Calu3 (cell line): ENCODE measurements at regions of chr17 and their contacts with region 1.

Region 1: DNA sequence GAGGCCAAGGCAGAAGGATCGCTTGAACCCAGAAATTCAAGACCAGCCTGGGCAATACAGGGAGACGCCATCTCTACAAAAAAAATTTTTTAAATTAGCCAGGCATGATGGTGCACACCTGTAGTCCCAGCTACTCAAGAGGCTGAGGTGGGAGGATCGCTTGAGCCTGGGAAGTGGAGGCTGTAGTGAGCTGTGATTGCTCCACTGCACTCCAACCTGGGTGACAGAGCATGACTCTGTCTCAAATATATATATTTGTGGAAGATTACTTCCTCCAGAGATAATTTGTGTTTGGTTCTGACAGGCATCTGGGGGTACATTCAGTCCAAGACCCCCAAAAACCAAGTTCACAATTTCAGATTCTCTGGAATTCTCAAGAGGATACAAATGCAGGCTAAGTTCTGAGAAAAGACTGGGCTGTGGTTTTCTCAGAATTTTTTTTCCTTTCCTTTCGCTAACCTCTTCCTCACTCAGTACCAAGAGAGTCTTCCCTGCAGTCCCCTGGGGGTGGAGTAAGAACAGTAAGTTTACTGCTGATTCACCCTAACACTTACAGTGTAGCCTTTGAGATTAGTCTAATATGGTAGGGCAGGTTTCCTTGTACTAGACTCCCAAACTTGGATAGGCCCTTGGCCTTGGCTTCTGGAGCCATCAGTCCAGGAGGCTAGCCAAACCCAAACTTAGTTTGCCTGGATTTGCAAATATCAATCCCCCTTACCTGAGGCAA is 15.1 kb downstream of the GSDMB start:
- DNase-seq: peak; percentile 66
- H3K4me3 Mint-ChIP-seq: no peak overlapping the region
- H3K27ac Mint-ChIP-seq: no peak overlapping the region
- H3K4me1 Mint-ChIP-seq: peaks cover 12% of the 10 kb centered on the region
- H3K27me3 Mint-ChIP-seq: no peaks in the 10 kb centered on the region
- CTCF ChIP-seq: no peak

Region 2: DNA sequence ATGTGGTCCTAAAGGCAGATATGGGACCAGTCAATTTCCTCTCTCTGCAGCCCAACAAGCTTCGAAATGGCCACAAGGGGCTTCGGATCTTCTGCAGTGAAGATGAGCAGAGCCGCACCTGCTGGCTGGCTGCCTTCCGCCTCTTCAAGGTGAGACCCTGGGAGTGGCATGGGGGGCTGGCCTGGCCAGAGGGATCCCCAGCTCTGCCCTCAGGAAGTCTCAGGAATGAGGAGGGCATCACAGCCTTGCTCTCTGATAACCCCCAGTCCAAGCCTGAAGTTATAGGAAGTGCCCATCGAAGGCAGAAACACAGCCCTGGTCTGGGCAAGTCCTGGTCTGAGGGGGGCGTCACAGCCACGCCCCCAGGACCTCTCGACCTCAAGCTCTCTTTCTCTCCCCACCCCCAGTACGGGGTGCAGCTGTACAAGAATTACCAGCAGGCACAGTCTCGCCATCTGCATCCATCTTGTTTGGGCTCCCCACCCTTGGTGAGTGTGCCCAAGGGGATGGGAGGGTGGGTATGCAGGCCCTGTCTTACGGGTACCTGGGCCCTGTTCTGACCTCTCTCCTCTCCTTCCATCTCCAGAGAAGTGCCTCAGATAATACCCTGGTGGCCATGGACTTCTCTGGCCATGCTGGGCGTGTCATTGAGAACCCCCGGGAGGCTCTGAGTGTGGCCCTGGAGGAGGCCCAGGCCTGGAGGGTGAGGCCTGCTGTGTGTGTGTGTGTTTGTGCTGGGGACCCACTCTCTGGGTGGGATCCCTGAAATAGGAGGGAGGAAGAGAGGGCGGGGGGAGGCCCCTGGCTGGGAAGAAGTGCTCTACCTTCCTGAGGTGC is 158.3 kb before region 1 on chr17:
- CTCF ChIA-PET with region 1: interaction called, 36 read pairs
- intact Hi-C with region 1: no loop called
- DNase-seq: no peak
- H3K4me3 Mint-ChIP-seq: no peak overlapping the region
- H3K27ac Mint-ChIP-seq: no peak overlapping the region
- H3K4me1 Mint-ChIP-seq: peaks cover 32% of the 10 kb centered on the region
- H3K27me3 Mint-ChIP-seq: no peaks in the 10 kb centered on the region
- CTCF ChIP-seq: no peak

Region 3: DNA sequence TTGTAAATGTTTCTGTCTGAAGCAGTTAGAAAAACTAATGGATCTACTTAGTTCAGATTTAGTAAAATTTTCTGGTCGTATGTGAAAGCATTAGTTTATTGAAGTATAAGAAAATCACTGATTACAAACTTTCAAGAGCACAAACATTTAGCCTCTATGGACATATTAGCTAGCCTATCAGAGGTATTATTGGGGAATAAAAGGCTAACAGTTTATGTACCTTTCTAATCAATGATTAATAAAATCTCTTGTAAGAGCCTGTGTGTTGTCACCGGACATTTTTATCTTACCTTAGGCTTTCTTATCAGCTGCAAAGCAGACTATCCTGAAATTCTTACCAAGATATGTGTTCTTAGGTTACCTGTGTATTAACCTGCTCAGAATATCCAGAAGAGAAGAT is 14.1 kb before region 1 on chr17:
- CTCF ChIA-PET with region 1: interaction called, 4,357 read pairs
- intact Hi-C with region 1: loop called (anchors 1 kb)
- DNase-seq: peak; percentile 82
- H3K4me3 Mint-ChIP-seq: no peak overlapping the region
- H3K27ac Mint-ChIP-seq: no peak overlapping the region
- H3K4me1 Mint-ChIP-seq: peaks cover 26% of the 10 kb centered on the region
- H3K27me3 Mint-ChIP-seq: peaks cover 22% of the 10 kb centered on the region
- CTCF ChIP-seq: no peak

Region 4: GRCh38 chr17:40157973-40158372 is 254.7 kb after region 1 on chr17:
- CTCF ChIA-PET with region 1: no interaction called
- intact Hi-C with region 1: no loop called
- DNase-seq: no peak
- H3K4me3 Mint-ChIP-seq: no peak overlapping the region
- H3K27ac Mint-ChIP-seq: no peak overlapping the region
- H3K4me1 Mint-ChIP-seq: no peaks in the 10 kb centered on the region
- H3K27me3 Mint-ChIP-seq: no peaks in the 10 kb centered on the region
- CTCF ChIP-seq: no peak

Region 5: DNA sequence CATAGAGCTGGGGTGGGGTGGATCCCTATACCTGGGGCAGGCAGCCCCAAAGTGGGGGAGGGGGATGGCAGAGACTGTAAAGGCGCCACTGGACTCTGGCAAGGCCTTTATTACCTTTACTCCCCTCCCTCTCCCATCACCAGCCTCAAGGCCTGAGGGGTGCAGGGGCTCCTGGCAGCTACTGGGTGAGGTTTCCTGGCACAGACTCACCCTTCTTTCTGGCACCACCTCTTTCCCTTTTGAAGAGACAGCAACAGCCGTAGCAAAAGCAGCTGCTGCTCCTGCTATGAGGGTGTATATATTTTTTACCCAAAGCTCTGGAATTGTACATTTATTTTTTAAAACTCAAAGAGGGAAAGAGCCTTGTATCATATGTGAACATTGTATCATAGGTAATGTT is 291.5 kb after region 1 on chr17:
- CTCF ChIA-PET with region 1: no interaction called
- intact Hi-C with region 1: no loop called
- DNase-seq: no peak
- H3K4me3 Mint-ChIP-seq: no peak overlapping the region
- H3K27ac Mint-ChIP-seq: no peak overlapping the region
- H3K4me1 Mint-ChIP-seq: no peaks in the 10 kb centered on the region
- H3K27me3 Mint-ChIP-seq: no peaks in the 10 kb centered on the region
- CTCF ChIP-seq: no peak

Region 6: GRCh38 chr17:40474419-40475002 is 571.2 kb after region 1 on chr17:
- CTCF ChIA-PET with region 1: interaction called, 11 read pairs
- intact Hi-C with region 1: no loop called
- DNase-seq: no peak
- H3K4me3 Mint-ChIP-seq: no peak overlapping the region
- H3K27ac Mint-ChIP-seq: no peak overlapping the region
- H3K4me1 Mint-ChIP-seq: no peaks in the 10 kb centered on the region
- H3K27me3 Mint-ChIP-seq: peaks cover 65% of the 10 kb centered on the region
- CTCF ChIP-seq: no peak